ENCODE measurements at regions of chr1 and their contacts with region 1.

Region 1: DNA sequence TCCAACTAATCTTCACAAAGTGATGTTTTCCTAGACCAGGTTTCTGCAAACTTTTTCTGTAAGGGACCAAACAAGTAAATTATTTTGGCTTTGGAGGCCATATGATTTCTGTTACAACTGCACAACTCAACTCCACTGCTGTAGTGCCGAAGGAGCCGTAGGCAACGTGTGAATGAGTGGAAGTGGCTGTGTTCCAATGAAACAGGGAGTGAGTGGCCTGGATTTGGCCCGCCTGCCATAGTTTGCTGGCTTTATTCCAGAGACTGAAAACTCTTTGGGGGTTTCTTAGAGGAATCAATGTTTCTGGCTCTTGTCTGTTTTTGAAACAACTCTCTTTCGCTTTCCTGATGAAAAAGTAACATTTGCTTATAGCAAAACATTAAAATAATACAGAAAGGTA is 12.6 kb upstream of the ACTL8 start:
- DNase-seq: no peak
- H3K4me3 ChIP-seq: no peak overlapping the region
- H3K27ac ChIP-seq: no peak overlapping the region
- H3K4me1 ChIP-seq: peaks cover 0 to 2% (median 0%) of the 10 kb centered on the region in 4 experiments; a peak in 2 of 7 replicates
- H3K27me3 ChIP-seq: no peaks in the 10 kb centered on the region
- CTCF ChIP-seq: no peak
- EP300 ChIP-seq: no peak
- POLR2A ChIP-seq: no peak
- RAD21 ChIP-seq: no peak

Region 2: DNA sequence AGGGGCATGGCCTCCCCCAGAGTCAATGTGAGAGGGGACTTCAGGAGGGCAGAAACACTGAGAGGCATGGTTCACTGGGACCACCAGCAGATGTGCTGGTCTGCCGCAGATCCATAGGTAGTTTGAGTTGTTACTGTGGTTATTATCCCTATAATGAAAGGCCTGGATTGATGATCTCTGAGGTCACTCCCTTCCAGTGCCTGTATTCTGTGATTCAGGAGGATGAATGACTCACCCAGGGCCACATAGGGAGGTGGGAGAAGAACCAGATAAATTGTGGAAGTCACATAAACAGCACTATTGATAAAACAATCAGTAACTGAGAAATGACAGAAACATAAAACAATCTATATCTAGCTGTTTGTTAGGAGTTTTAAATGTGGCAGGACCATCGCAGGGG is 10.1 kb before region 1 on chr1:
- CTCF ChIA-PET with region 1: interaction called, 16 read pairs
- POLR2A ChIA-PET with region 1: no interaction called
- DNase-seq: no peak
- H3K4me3 ChIP-seq: no peak overlapping the region
- H3K27ac ChIP-seq: no peak overlapping the region
- H3K4me1 ChIP-seq: peaks cover 0 to 7% (median 1%) of the 10 kb centered on the region in 4 experiments; a peak in 5 of 7 replicates
- H3K27me3 ChIP-seq: no peaks in the 10 kb centered on the region
- CTCF ChIP-seq: no peak
- EP300 ChIP-seq: no peak
- POLR2A ChIP-seq: no peak
- RAD21 ChIP-seq: no peak

Region 3: DNA sequence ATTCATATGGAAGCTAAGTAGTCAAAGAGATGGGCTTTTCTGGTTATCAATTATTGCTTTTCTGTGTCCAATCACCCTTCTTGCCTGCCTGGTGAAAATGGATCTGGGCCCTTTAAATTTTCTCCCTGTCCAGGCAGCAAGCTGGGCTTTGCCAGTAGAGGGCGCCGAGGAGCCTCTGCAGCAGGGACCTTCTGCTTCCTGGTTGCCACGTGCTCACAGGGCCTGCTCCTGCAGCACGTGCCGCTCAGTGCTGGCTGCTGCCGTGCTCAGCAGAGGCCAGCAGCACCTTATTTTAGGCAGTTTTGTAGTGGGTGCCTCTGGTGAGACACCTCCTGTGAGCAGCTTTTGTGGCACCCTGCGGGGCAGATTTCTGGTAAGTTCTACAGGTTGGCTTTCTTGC is 16.5 kb after region 1 on chr1:
- CTCF ChIA-PET with region 1: interaction called, 15 read pairs
- POLR2A ChIA-PET with region 1: interaction called, 4 read pairs
- DNase-seq: peak in 1 of 2 experiments; percentile 71
- H3K4me3 ChIP-seq: no peak overlapping the region
- H3K27ac ChIP-seq: no peak overlapping the region
- H3K4me1 ChIP-seq: no peaks in the 10 kb centered on the region; a peak in 1 of 7 replicates
- H3K27me3 ChIP-seq: 0 out of 7 replicates have a peak, but pooled peaks cover 0 to 3% (median 0%) of the 10 kb centered on the region in 4 experiments
- CTCF ChIP-seq: peak; percentile 42 to 55 (median 49)
- EP300 ChIP-seq: no peak
- POLR2A ChIP-seq: no peak
- RAD21 ChIP-seq: peak; percentile 35 to 59

Region 4: GRCh38 chr1:17768651-17769241 is 26.2 kb after region 1 on chr1:
- CTCF ChIA-PET with region 1: interaction called, 36 read pairs
- POLR2A ChIA-PET with region 1: interaction called, 3 read pairs
- DNase-seq: no peak
- H3K4me3 ChIP-seq: no peak overlapping the region
- H3K27ac ChIP-seq: no peak overlapping the region
- H3K4me1 ChIP-seq: no peaks in the 10 kb centered on the region; a peak in 2 of 7 replicates
- H3K27me3 ChIP-seq: no peaks in the 10 kb centered on the region
- CTCF ChIP-seq: no peak
- EP300 ChIP-seq: no peak
- POLR2A ChIP-seq: no peak
- RAD21 ChIP-seq: no peak